ENCODE measurements at regions of chr3 and their contacts with region 1.

Region 1: GRCh38 chr3:102229062-102229655 is 205.7 kb upstream of the ZPLD1 start:
- DNase-seq: no peak
- H3K4me3 ChIP-seq: no peak overlapping the region
- CTCF ChIP-seq: peak; percentile 83

Region 2: DNA sequence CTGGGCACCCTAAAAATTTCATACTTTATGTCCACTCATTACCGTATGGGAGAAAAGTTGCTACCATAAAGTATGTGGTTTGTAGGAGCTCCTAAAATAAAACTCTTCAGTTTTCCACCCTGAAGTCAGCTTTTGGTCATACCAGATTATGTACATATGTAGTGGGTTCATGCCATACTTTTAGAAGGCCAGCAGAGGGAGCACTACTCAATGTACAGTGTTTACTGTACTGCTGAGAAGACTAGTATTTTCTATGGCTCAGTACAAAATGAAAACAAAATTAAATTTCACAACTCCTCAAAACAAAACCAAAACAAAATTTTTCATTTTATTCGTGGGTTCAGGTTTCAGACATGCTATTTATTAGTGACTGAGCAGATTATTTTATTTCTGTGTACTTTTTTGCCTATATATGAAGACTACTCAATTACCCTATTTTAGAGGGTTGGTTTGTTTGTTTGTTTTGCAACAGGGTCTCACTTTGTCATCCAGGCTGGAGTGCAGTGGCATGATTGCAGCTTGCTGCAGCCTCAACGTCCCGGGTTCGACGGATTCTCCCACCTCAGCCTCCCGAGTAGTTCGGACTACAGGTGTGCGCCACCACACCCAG is 425.9 kb before region 1 on chr3:
- CTCF ChIA-PET with region 1: interaction called, 1,077 read pairs
- POLR2A ChIA-PET with region 1: no interaction called
- DNase-seq: no peak
- H3K4me3 ChIP-seq: no peak overlapping the region
- CTCF ChIP-seq: peak; percentile 75

Region 3: DNA sequence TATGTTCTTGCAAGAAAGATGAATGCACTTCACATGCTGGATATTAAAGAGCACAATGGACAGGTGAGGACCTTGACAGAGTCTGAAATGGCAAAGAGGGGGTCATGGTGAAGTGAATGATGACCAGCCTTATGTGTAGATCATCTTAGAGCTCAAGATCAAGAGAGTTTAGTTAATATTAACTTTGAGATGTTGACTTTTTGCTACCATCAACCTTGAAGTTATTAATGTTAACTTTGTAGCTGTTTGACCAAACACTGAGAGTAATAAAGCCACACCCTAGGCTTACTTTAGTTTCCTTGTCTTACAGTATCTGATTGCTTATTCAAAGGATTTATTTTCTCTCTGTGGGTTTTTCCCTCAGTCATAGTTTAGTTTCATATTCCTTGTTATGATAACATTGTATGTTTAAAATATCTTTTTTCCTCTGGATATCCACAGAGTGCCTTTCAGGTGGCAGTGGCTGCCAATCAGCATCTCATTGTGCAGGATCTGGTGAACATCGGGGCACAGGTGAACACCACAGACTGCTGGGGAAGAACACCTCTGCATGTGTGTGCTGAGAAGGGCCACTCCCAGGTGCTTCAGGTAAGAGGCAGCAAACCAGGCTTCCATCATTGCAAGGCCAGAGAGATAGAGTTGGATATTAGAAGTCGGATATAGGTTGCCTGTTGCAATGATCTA is 374.4 kb before region 1 on chr3:
- CTCF ChIA-PET with region 1: interaction called, 42 read pairs
- POLR2A ChIA-PET with region 1: interaction called, 40 read pairs
- DNase-seq: no peak
- H3K4me3 ChIP-seq: no peak overlapping the region
- CTCF ChIP-seq: no peak

Region 4: GRCh38 chr3:101902041-101902440 is 327.1 kb before region 1 on chr3:
- CTCF ChIA-PET with region 1: interaction called, 16 read pairs
- POLR2A ChIA-PET with region 1: no interaction called
- DNase-seq: peak; percentile 90
- H3K4me3 ChIP-seq: no peak overlapping the region
- CTCF ChIP-seq: no peak

Region 5: GRCh38 chr3:102180291-102181039 is 48.7 kb before region 1 on chr3:
- CTCF ChIA-PET with region 1: interaction called, 14 read pairs
- POLR2A ChIA-PET with region 1: no interaction called
- DNase-seq: peak; percentile 95
- H3K4me3 ChIP-seq: no peak overlapping the region
- CTCF ChIP-seq: no peak

Region 6: GRCh38 chr3:102441832-102442231 is 212.7 kb after region 1 on chr3:
- CTCF ChIA-PET with region 1: no interaction called
- POLR2A ChIA-PET with region 1: no interaction called
- DNase-seq: no peak
- H3K4me3 ChIP-seq: no peak overlapping the region
- CTCF ChIP-seq: no peak

Region 7: GRCh38 chr3:102529452-102529851 is 300.3 kb after region 1 on chr3:
- CTCF ChIA-PET with region 1: interaction called, 214 read pairs
- POLR2A ChIA-PET with region 1: no interaction called
- DNase-seq: no peak
- H3K4me3 ChIP-seq: no peak overlapping the region
- CTCF ChIP-seq: no peak